BJ (cell line): ENCODE measurements at regions of chr19 and their contacts with region 1.

Region 1: DNA sequence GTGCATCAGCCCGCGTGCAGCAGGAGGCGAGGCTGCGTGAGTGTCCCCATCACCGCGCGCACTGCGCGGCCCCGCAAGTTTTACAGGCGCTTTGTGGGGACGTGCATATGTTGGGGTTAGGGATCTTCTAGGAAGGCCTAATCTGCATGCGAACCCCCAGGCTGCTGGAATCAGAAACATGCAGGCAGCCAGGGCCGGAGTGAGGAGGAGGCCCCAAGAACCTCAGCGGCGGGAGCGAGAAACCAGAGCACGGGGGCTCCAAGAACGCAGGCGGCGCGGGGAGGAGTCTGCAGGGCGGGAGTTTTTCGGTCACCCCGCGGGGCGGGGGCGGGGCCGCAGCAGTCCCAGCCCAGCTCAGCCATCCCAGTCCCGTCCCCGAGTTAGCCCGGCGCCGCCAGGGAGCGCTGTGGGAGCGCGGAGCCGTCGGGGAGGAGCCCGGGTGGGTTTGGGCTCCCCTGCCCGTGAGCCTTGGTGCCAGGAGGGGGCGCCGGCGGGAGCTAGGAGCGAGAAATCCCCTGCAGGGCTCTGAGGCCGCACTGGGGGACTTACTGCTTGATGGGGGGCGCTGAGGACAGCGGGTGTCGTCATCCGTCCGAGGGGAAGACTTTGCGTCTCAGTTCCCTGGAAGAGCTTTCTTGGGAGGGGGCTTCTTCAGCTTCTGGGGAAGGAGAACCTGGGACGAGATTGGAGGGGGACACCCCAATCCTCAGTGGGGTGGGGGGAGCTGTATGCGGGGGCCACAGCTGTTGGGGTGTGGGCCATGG is 933 bp upstream of the NRTN start:
- DNase-seq: no peak
- H3K4me3 ChIP-seq: peak overlapping the region; percentile 10; the same call in 1 of the 2 replicates
- H3K27me3 ChIP-seq: peaks cover 9% of the 10 kb centered on the region
- CTCF ChIP-seq: peak; percentile 95

Region 2: DNA sequence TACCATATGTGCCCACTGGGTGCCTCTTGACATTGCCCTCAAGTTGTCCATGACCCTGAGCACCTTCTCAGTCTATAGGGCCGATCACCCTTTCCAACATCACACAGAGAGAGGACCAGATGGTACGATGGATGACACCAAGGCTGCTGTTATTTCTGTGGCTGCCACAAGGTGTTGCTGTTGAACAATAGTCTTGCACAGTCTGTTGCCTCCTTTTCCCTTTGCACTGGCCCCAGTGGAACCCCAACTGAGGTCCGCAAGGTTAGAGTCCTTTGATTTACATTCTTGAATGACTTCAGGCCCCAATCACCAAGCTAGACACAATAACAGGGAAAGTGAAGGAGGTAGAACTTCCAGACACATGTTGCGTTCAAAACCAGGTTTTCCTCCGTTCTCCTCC is 288.2 kb before region 1 on chr19:
- CTCF ChIA-PET with region 1: no interaction called
- POLR2A ChIA-PET with region 1: no interaction called
- DNase-seq: no peak
- H3K4me3 ChIP-seq: no peak overlapping the region
- H3K27me3 ChIP-seq: no peaks in the 10 kb centered on the region
- CTCF ChIP-seq: peak; percentile 13; the same call in 1 of the 2 replicates

Region 3: GRCh38 chr19:5753743-5754142 is 50.2 kb before region 1 on chr19:
- CTCF ChIA-PET with region 1: no interaction called
- POLR2A ChIA-PET with region 1: no interaction called
- DNase-seq: no peak
- H3K4me3 ChIP-seq: no peak overlapping the region
- H3K27me3 ChIP-seq: no peaks in the 10 kb centered on the region
- CTCF ChIP-seq: no peak

Region 4: DNA sequence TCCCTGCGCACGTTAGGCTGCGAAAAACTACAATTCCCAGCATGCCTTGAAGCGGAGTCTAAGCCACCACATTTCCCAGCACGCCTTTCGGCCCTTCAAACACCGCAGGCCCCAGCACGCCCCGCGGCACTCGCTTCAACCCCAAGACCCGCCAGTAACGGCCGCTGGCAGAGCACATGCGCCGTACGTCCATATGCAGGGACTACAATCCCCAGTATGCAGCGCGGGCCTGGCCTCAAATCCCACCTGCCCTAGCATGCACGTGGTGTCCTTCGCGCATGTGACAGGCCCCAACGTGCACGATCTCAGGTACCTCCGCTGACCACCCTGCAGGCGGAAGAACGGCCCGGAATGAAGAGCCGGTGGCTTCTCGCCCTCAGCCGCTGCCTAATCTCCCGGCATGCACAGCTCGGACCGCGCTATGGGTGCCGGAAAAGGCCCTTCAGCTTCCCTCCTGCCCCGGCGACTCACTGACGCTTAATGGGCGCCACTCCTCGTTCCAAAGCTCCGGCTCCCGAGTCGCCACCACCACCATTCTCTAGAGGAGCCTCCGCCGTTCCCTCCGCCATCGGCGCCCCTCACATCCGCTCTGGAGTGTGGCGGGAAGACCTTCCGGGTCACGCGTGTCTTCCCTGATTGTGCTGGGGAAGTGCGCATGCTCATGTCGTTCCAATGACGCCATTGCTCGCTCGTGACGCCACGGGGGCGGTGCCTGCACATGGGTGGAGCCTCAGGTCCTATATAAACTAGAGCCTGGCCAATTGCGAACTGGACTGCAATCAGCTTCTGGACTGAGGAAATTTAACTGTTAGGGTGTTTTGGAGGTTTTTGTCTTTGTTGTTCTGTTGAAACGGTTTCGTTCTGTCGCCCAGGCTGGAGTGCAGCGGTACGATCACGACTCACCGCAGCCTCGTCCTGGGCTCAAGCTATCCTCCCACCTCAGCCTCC is 13.1 kb before region 1 on chr19 and contains the start of gene DUS3L:
- CTCF ChIA-PET with region 1: interaction called, 57 read pairs
- POLR2A ChIA-PET with region 1: no interaction called
- DNase-seq: peak; percentile 94
- H3K4me3 ChIP-seq: peak within 1 kb of the TSS; percentile 71
- H3K27me3 ChIP-seq: no peaks in the 10 kb centered on the region
- CTCF ChIP-seq: no peak
- polyA plus RNA-seq, gene DUS3L: 9.9 and 13.7 TPM in 2 replicates

Region 5: GRCh38 chr19:5880604-5881078 is 76.7 kb after region 1 on chr19:
- CTCF ChIA-PET with region 1: interaction called, 23 read pairs
- POLR2A ChIA-PET with region 1: no interaction called
- DNase-seq: no peak
- H3K4me3 ChIP-seq: no peak overlapping the region
- H3K27me3 ChIP-seq: peaks cover 3% of the 10 kb centered on the region
- CTCF ChIP-seq: no peak

Region 6: DNA sequence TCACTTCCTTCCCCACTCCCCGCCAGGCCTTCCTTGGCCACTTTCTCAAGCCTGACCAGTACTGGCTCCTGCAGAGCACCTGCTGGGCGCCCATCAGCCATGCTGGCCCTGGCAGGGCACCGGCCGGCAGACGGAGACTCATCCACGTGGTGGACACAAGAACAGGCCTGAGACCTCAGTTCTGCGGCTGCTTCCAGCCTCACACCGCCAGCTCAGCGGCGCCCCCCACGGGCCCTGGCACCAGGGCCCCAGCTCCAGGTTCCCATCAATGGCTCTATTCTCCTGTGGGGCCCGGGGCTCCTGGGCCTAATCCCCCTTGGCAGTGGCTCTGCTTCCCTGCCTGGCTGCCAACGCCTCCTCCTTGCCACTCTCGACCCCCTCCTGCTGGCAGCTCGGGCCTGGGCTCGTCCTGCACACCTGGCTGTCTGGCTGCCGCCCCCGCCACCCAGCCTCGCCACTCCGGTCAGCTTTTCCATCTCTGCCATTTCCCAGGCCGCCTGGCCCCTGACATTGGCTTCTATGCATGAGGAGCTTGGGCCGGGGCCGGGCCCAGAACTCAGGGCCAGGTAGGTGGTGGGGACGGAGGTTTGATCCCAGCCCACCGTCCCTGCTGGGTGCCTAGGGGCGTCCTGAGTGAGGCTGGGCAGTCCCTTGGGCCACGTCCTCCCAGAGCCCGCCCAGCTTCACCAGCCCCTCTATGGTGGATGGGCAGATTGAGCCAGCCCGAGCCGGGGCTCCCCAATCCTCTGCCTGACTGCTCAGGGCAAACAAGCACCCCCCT is 93.4 kb after region 1 on chr19:
- CTCF ChIA-PET with region 1: interaction called, 80 read pairs
- POLR2A ChIA-PET with region 1: no interaction called
- DNase-seq: no peak
- H3K4me3 ChIP-seq: no peak overlapping the region
- H3K27me3 ChIP-seq: no peaks in the 10 kb centered on the region
- CTCF ChIP-seq: no peak

Region 7: DNA sequence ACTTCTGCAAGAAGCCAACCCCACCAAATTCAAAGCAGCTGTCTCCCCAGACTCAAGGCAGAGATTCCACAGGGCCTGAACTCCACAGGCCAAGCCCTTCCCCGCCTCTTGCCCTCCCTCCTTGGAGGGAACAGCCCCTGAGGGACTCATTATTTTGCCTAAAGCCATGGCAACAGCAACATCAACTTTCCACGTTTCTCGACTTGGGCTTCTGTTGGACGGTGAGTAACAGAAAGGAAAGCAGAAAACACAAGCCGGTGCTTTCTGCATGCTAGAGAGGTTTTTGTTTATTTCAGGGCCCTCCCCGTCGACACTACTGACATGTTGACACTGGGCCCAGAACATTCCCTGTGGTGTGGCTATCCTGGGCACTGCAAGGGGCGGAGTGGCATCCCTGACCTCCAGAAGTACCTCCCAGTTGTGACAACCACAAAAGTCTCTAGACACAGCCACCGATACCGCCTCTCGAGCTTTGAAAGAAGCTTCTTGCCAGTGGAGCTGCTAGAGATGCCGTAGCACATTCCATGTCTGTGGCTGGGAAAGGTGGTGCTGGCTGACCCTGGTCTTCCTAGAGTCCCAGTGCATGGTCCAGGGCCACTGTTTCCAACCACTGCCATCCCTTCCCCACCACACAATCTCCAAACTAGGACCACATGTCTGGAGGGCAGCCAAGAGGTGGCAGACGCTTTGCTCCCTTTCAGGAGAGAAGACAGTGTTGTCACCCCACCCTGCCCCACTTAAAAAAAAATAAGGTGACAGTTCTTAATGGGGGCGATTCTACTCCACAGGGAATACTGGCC is 122.9 kb after region 1 on chr19:
- CTCF ChIA-PET with region 1: interaction called, 11 read pairs
- POLR2A ChIA-PET with region 1: no interaction called
- DNase-seq: peak; percentile 96
- H3K4me3 ChIP-seq: no peak overlapping the region
- H3K27me3 ChIP-seq: no peaks in the 10 kb centered on the region
- CTCF ChIP-seq: no peak